Activated CD4-positive, alpha-beta T cell treated with anti-CD3 and anti-CD28 coated beads, Interleukin-2, amount 10 ng/mL, durations not matched to agents 24 days and 14 days (primary cell): ENCODE measurements at regions of chr10 and their contacts with region 1.

Region 1: GRCh38 chr10:33248638-33249037 is 85.8 kb downstream of the NRP1 start:
- DNase-seq: peak; percentile 86
- H3K4me3 Mint-ChIP-seq: peak overlapping the region; percentile 68
- H3K27ac Mint-ChIP-seq: peak overlapping the region; percentile 78
- H3K4me1 Mint-ChIP-seq: peaks cover 65% of the 10 kb centered on the region
- H3K27me3 Mint-ChIP-seq: peaks cover 12% of the 10 kb centered on the region

Region 2: DNA sequence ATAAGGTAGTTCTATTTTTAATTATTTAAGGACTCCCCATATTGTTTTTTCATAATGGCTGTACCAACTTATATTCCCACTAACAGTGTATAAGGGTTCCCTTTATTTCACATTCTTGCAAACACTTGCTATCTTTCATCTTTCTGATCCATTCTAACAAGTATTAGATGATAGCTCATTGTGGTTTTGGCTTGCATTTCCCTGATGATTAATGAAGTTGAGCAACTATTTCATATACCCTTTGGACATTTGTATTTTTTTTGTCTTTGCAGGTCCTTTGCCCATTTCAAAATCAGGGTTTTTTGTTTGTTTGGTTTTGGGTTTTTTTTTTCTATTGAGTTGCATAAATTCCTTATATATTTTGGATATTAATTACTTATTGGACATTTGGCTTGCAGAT is 1008.9 kb before region 1 on chr10:
- intact Hi-C with region 1: loop called (anchors 2 kb)
- DNase-seq: no peak
- H3K4me3 Mint-ChIP-seq: no peak overlapping the region
- H3K27ac Mint-ChIP-seq: no peak overlapping the region
- H3K4me1 Mint-ChIP-seq: peaks cover 10% of the 10 kb centered on the region
- H3K27me3 Mint-ChIP-seq: no peaks in the 10 kb centered on the region

Region 3: DNA sequence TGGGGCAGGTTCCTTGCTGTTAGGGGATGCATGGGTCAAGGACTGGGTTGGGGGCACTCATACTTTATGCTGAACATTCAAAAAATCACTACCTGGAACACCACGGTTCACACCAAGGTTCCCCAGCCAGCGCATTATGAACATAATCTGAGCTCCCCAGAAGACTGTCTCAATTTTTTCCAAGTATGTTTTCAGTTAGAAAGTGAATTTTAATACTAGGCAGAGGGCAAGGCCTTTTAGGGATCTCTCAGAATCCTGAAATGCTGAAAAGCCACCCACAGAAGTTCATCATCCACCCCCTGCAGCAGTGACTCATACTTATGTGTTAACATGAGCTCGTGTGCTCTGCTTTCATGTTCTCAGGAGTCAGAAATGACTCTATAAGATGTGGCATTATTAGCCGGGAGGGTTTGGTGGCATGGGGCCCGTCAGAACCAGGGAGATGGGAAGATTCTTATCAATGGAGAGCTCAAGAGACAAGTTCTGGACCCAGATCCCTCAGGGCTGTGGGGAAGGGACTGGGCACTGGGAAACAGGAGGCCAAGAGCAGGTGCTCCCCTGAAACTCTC is 105.4 kb before region 1 on chr10:
- intact Hi-C with region 1: loop called (anchors 2 kb)
- DNase-seq: peak; percentile 79
- H3K4me3 Mint-ChIP-seq: peak overlapping the region; percentile 8
- H3K27ac Mint-ChIP-seq: peak overlapping the region; percentile 80
- H3K4me1 Mint-ChIP-seq: peaks cover 41% of the 10 kb centered on the region
- H3K27me3 Mint-ChIP-seq: peaks cover 2% of the 10 kb centered on the region

Region 4: GRCh38 chr10:33215154-33215553 is 33.5 kb before region 1 on chr10:
- intact Hi-C with region 1: loop called (anchors 2 kb)
- DNase-seq: no peak
- H3K4me3 Mint-ChIP-seq: no peak overlapping the region
- H3K27ac Mint-ChIP-seq: no peak overlapping the region
- H3K4me1 Mint-ChIP-seq: peaks cover 19% of the 10 kb centered on the region
- H3K27me3 Mint-ChIP-seq: peaks cover 2% of the 10 kb centered on the region

Region 5: GRCh38 chr10:33265621-33266020 is 17.0 kb after region 1 on chr10:
- intact Hi-C with region 1: loop called (anchors 1 kb)
- DNase-seq: peak; percentile 63
- H3K4me3 Mint-ChIP-seq: no peak overlapping the region
- H3K27ac Mint-ChIP-seq: peak overlapping the region; percentile 34
- H3K4me1 Mint-ChIP-seq: peaks cover 20% of the 10 kb centered on the region
- H3K27me3 Mint-ChIP-seq: peaks cover 21% of the 10 kb centered on the region

Region 6: GRCh38 chr10:33290286-33291052 is 41.8 kb after region 1 on chr10:
- intact Hi-C with region 1: no loop called
- DNase-seq: no peak
- H3K4me3 Mint-ChIP-seq: no peak overlapping the region
- H3K27ac Mint-ChIP-seq: no peak overlapping the region
- H3K4me1 Mint-ChIP-seq: peaks cover 2% of the 10 kb centered on the region
- H3K27me3 Mint-ChIP-seq: peaks cover 13% of the 10 kb centered on the region

Region 7: DNA sequence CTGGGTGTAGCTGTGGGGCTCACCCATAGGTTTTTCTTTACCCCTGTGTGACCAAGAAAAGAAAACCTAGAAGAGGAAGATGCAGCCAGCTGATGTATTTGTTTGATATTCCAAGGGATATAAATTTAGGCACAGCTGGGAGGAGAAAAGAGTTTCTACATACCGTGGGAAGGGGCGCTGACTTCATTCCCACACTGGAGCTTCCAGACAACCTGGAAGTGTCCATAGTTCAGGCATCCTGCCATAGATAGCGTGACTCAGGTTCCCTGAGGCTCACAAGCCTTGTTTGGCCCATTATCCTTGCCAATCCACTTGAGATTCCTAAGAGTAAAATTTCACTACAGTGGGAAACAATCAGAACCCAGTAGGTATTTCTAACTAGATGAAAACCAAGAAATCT is 457.6 kb after region 1 on chr10:
- intact Hi-C with region 1: no loop called
- DNase-seq: no peak
- H3K4me3 Mint-ChIP-seq: no peak overlapping the region
- H3K27ac Mint-ChIP-seq: no peak overlapping the region
- H3K4me1 Mint-ChIP-seq: no peaks in the 10 kb centered on the region
- H3K27me3 Mint-ChIP-seq: peaks cover 2% of the 10 kb centered on the region

Region 8: GRCh38 chr10:34121781-34122628 is 873.4 kb after region 1 on chr10:
- intact Hi-C with region 1: loop called (anchors 1 kb)
- DNase-seq: peak; percentile 77
- H3K4me3 Mint-ChIP-seq: peak overlapping the region; percentile 56
- H3K27ac Mint-ChIP-seq: peak overlapping the region; percentile 77
- H3K4me1 Mint-ChIP-seq: peaks cover 24% of the 10 kb centered on the region
- H3K27me3 Mint-ChIP-seq: no peaks in the 10 kb centered on the region

Region 9: GRCh38 chr10:34768261-34768971 is 1519.8 kb after region 1 on chr10:
- intact Hi-C with region 1: no loop called
- DNase-seq: no peak
- H3K4me3 Mint-ChIP-seq: no peak overlapping the region
- H3K27ac Mint-ChIP-seq: no peak overlapping the region
- H3K4me1 Mint-ChIP-seq: no peaks in the 10 kb centered on the region
- H3K27me3 Mint-ChIP-seq: peaks cover 3% of the 10 kb centered on the region